GM12878 (cell line): ENCODE measurements at regions of chr16 and their contacts with region 1.

Region 1: GRCh38 chr16:31873556-31874365 is at the start of gene ZNF267:
- DNase-seq: peak; percentile 50
- ATAC-seq: peak; percentile 73
- H3K4me3 ChIP-seq: peak within 1 kb of the TSS; percentile 94
- H3K27ac ChIP-seq: peak within 1 kb of the TSS; percentile 99
- H3K4me1 ChIP-seq: peaks cover 35% of the 10 kb centered on the region
- H3K27me3 ChIP-seq: no peaks in the 10 kb centered on the region
- CTCF ChIP-seq: no peak
- EP300 ChIP-seq: no peak
- POLR2A ChIP-seq: peak; percentile 89
- RAD21 ChIP-seq: no peak
- polyA plus RNA-seq, gene ZNF267: 16.3 to 18.9 TPM

Region 2: DNA sequence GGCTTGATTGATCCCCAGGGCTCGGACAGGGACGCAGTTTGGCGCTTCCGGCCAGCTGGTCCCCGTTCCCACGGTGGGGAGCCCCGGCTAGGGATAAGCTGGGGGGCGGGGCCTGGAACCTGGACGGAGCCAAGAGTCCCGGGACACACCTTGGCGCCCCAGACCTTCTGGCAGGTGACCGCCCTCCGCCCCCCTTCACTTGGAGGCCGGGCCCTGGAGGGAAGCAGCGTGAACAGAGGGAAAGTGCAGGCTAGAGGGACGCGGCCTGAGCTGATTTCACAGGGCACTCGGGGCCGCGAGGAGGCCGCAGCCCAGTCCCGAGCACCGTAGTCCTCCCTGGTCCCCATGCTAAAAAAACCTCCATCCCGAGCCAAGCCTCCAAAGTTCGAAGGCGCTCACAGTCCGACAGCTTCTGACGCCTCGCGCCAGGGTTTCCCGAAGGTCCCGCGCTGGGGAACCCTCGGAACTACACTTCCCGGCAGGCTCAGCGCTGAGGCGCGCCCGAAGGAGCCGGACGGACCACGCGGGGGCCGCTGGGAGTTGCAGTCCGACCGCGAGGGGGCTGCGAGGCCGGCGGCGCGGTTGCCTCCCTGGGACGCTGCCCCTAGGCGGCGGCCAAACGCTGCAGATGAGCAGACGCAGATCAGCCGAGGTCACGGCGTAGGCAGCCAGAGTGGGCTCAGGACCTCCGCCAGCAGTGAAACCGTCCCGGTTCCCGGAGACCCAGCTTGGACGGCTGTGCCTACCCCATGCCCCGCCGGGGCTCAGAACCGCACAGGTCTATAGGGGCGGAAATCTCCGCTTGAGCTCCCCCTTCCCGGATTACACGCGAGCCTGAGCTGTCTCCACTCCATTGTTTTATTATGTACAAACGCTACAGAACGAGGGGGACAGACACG is 1782.0 kb before region 1 on chr16 and contains the start of gene TBX6:
- CTCF ChIA-PET with region 1: no interaction called
- POLR2A ChIA-PET with region 1: no interaction called
- RAD21 ChIA-PET with region 1: no interaction called
- SMC1A ChIA-PET with region 1: no interaction called
- in situ Hi-C with region 1: loop called (anchors 25 kb)
- intact Hi-C with region 1: no loop called
- DNase-seq: peak; percentile 64
- ATAC-seq: peak; percentile 88
- H3K4me3 ChIP-seq: peak within 1 kb of the TSS; percentile 72
- H3K27ac ChIP-seq: peak within 1 kb of the TSS; percentile 88
- H3K4me1 ChIP-seq: peaks cover 26% of the 10 kb centered on the region
- H3K27me3 ChIP-seq: no peaks in the 10 kb centered on the region
- CTCF ChIP-seq: peak; percentile 82 to 95 (median 83)
- EP300 ChIP-seq: no peak
- POLR2A ChIP-seq: peak; percentile 84
- RAD21 ChIP-seq: peak; percentile 58
- polyA plus RNA-seq, gene TBX6: not detected

Region 3: GRCh38 chr16:30761928-30762810 is 1111.6 kb before region 1 on chr16 and contains the starts of genes CFAP119 and RNF40:
- CTCF ChIA-PET with region 1: no interaction called
- POLR2A ChIA-PET with region 1: no interaction called
- RAD21 ChIA-PET with region 1: no interaction called
- SMC1A ChIA-PET with region 1: no interaction called
- in situ Hi-C with region 1: loop called (anchors 25 kb)
- intact Hi-C with region 1: no loop called
- DNase-seq: peak; percentile 88
- ATAC-seq: peak; percentile 95
- H3K4me3 ChIP-seq: peak within 1 kb of the TSS; percentile 83
- H3K27ac ChIP-seq: peak within 1 kb of the TSS; percentile 74
- H3K4me1 ChIP-seq: peaks cover 9% of the 10 kb centered on the region
- H3K27me3 ChIP-seq: no peaks in the 10 kb centered on the region
- CTCF ChIP-seq: 0 out of 6 replicates have a peak, but pooled peaks of 1 of the 3 experiments have one; percentile 6
- EP300 ChIP-seq: no peak
- POLR2A ChIP-seq: peak; percentile 93
- RAD21 ChIP-seq: no peak
- polyA plus RNA-seq, gene CFAP119: 3.2 to 3.9 TPM
- polyA plus RNA-seq, gene RNF40: 3.7 to 8.0 TPM

Region 4: DNA sequence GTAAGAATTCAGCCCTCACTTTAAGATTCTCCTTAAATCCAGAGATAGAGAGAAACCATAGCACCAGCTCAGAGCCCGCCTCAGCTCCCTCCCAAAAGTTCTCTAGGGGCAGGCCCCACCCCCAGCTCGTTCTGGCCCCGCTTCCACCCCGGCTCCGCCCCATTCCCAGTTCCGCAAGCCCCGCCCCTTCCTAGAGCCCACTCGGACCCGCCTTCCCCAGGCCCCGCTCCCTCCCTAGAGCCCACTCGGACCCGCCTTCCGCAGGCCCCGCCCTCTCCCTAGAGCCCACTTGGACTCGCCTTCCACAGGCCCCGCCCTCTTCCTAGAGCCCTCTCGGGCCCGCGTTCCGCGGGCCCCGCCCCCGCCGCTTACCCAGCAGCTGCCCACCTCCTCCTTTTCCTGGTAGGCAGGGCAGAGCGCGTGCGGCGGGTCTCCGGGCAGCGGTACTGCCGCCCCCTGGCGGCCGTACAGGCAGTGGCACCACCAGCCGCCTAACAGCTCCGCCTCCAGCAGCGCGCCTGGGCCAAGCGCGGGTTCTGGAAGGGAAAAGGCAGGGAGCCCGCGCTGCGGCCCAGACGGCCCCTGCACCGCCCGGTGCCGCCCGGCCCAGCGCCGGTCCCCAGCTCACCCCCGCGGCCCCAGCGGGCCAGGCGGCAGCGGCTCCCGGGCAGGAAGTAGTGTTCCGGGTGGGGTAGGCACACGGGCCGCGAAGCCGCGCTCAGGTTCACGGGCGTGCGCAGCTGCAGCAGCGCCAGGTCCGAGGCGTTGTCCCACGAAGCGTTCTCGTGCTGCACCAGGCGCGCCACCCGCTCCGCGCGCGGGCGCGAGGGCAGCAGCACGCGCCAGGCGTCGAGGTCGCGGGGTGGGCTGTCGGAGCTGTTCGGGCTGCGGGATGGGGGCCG is 731.4 kb before region 1 on chr16:
- CTCF ChIA-PET with region 1: interaction called, 4 read pairs
- POLR2A ChIA-PET with region 1: no interaction called
- RAD21 ChIA-PET with region 1: interaction called, 5 read pairs
- SMC1A ChIA-PET with region 1: interaction called, 3 read pairs
- in situ Hi-C with region 1: loop called (anchors 10 kb)
- intact Hi-C with region 1: no loop called
- DNase-seq: peak; percentile 89
- ATAC-seq: peak; percentile 95
- H3K4me3 ChIP-seq: peak overlapping the region; percentile 63; the same call in 1 of the 2 replicates
- H3K27ac ChIP-seq: peak overlapping the region; percentile 55
- H3K4me1 ChIP-seq: peaks cover 9% of the 10 kb centered on the region
- H3K27me3 ChIP-seq: no peaks in the 10 kb centered on the region
- CTCF ChIP-seq: peak; percentile 87 to 97 (median 95)
- EP300 ChIP-seq: no peak
- POLR2A ChIP-seq: peak; percentile 36; the same call in 1 of the 2 replicates
- RAD21 ChIP-seq: peak; percentile 63

Region 5: DNA sequence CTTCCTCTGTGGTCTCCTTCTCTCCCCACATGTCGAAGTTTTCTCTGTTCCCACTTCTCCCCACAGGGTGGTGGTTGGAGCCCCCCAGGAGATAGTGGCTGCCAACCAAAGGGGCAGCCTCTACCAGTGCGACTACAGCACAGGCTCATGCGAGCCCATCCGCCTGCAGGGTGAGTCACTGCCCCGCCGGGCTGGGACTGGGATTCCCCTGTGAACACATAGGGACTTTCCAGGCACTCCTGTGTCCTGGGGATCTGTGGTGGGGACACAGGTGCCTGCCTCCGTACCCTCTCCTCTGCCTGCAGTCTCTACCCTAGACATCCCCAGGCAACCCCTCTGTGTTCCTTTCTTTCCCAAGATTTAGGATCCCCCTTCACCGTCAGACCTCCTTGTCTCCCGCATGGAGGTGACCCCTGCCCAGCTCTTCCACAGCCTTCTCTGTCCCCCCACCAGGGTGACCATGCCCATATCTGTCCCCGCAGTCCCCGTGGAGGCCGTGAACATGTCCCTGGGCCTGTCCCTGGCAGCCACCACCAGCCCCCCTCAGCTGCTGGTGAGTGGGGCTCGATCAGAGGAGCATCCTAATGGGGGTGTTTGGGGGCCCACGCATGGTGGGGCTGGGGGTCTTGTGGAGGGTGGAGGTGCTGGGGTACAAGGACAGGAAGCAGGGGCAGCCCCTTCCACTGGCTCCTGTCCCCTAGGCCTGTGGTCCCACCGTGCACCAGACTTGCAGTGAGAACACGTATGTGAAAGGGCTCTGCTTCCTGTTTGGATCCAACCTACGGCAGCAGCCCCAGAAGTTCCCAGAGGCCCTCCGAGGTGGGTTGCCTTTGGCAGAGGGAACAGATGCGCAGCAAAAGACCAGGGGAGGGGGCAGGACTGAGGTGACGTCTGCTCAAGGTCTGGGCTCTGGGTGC is 608.2 kb before region 1 on chr16:
- CTCF ChIA-PET with region 1: no interaction called
- POLR2A ChIA-PET with region 1: no interaction called
- RAD21 ChIA-PET with region 1: no interaction called
- SMC1A ChIA-PET with region 1: no interaction called
- in situ Hi-C with region 1: loop called (anchors 10 kb)
- intact Hi-C with region 1: no loop called
- DNase-seq: peak; percentile 79
- ATAC-seq: peak; percentile 95
- H3K4me3 ChIP-seq: peak overlapping the region; percentile 32; the same call in 1 of the 2 replicates
- H3K27ac ChIP-seq: peak overlapping the region; percentile 88
- H3K4me1 ChIP-seq: peaks cover 32% of the 10 kb centered on the region
- H3K27me3 ChIP-seq: no peaks in the 10 kb centered on the region
- CTCF ChIP-seq: peak; percentile 20 to 21 (median 21); a peak in 2 of 6 replicates
- EP300 ChIP-seq: peak in 1 of 2 experiments; percentile 51; a peak in 1 of 4 replicates
- POLR2A ChIP-seq: no peak; the same call in 1 of the 2 replicates
- RAD21 ChIP-seq: peak; percentile 25; the same call in 1 of the 2 replicates

Region 6: DNA sequence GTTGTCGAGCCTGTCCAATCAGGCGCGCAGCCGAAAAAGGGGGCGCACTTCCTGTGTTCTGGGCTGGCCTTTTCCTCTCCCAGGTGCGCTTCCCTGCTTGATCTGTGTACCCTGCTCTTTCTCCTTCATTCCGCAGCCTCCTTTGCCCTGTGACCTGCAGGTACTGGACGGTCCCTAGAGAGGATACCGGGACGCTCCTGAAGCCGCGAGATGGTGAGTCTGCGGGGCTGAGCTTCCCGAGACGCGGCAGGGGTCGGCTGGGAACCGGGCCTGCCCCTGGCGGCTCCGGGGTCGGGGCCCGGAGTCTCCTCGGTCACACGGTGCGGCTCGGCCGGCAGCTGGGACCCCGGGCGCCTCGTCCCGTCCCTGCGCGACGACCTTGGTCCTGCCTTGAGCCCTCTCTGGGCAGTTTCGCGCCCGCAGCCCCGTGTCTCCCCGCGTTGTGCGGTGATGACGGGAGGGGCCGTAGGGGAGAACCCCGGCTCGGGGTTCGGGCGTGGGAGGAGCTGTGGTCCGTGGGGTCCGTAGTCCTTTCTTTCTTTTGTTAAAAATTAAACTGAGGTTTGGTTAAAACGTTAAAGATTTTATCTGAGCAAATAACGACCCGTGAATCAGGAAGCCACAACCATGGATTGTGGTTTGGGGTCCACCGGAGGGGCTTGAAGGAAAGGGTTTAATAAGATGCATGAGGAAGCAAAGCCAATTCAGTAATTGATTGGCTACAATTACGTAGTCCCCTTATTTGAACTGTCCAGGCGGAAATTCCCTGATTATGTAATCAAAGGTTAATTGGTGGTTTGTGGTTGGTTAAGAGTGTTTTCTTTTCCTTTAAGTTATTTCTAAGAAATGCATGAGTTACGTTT is 173.0 kb before region 1 on chr16:
- CTCF ChIA-PET with region 1: interaction called, 5 read pairs
- POLR2A ChIA-PET with region 1: interaction called, 7 read pairs
- RAD21 ChIA-PET with region 1: interaction called, 4 read pairs
- SMC1A ChIA-PET with region 1: interaction called, 3 read pairs
- in situ Hi-C with region 1: no loop called
- intact Hi-C with region 1: loop called (anchors 5 kb)
- DNase-seq: peak; percentile 67
- ATAC-seq: peak; percentile 95
- H3K4me3 ChIP-seq: peak overlapping the region; percentile 91
- H3K27ac ChIP-seq: peak overlapping the region; percentile 88
- H3K4me1 ChIP-seq: peaks cover 5% of the 10 kb centered on the region; the same call in 1 of the 2 replicates
- H3K27me3 ChIP-seq: no peaks in the 10 kb centered on the region
- CTCF ChIP-seq: peak in 2 of 3 experiments; percentile 6 to 7; a peak in 1 of 6 replicates
- EP300 ChIP-seq: peak; percentile 52 to 81; a peak in 3 of 4 replicates
- POLR2A ChIP-seq: peak; percentile 80
- RAD21 ChIP-seq: no peak

Region 7: GRCh38 chr16:31842864-31843263 is 30.9 kb before region 1 on chr16:
- CTCF ChIA-PET with region 1: no interaction called
- POLR2A ChIA-PET with region 1: no interaction called
- RAD21 ChIA-PET with region 1: no interaction called
- SMC1A ChIA-PET with region 1: no interaction called
- in situ Hi-C with region 1: no loop called
- intact Hi-C with region 1: no loop called
- DNase-seq: no peak
- ATAC-seq: no peak
- H3K4me3 ChIP-seq: no peak overlapping the region
- H3K27ac ChIP-seq: no peak overlapping the region
- H3K4me1 ChIP-seq: no peaks in the 10 kb centered on the region
- H3K27me3 ChIP-seq: no peaks in the 10 kb centered on the region
- CTCF ChIP-seq: no peak
- EP300 ChIP-seq: no peak
- POLR2A ChIP-seq: no peak
- RAD21 ChIP-seq: no peak